ENCODE measurements at regions of chr6 and their contacts with region 1.

Region 1: DNA sequence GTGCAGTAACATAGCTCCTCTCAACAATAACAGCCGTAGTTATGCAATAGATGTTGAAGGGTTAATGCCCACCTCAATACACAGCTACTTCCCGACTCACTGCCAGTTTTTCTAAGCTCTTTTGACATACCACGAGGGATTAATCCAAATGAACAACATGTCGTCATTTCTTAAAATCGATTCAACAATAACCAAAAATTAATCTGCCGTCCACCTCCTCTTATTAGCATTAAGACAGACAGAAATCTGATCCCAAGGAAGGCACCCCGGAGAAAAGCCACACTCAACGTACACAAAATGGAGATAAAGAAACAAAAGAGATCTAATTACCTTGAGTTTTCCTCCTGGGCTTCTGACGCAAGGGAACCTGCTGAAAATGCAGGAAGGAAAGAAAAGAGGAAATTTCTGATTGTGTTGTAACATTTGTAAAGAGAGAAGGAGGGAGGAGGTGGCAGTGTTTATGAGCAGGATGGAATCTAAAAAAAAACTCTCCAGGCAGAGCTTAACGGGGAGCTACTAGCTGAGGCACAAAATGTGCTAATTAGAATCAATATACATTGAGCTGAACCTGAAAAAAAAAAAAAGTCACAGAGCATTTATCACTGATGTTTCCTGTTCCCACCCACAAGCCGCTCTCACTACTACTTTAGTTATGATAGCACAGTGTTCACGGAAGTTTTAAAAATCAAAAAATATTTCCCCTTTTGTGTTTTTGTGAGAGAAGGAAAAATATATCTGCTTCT is 109.3 kb downstream of the IPCEF1 start:
- DNase-seq: no peak
- H3K4me3 Mint-ChIP-seq: peak overlapping the region; percentile 84
- H3K27ac Mint-ChIP-seq: peak overlapping the region; percentile 52
- H3K4me1 Mint-ChIP-seq: peaks cover 79% of the 10 kb centered on the region
- H3K27me3 Mint-ChIP-seq: peaks cover 27% of the 10 kb centered on the region

Region 2: GRCh38 chr6:154229786-154230185 is 17.5 kb before region 1 on chr6:
- intact Hi-C with region 1: loop called (anchors 1 kb)
- DNase-seq: peak; percentile 45
- H3K4me3 Mint-ChIP-seq: peak overlapping the region; percentile 51
- H3K27ac Mint-ChIP-seq: peak overlapping the region; percentile 66
- H3K4me1 Mint-ChIP-seq: peaks cover 44% of the 10 kb centered on the region
- H3K27me3 Mint-ChIP-seq: no peaks in the 10 kb centered on the region

Region 3: DNA sequence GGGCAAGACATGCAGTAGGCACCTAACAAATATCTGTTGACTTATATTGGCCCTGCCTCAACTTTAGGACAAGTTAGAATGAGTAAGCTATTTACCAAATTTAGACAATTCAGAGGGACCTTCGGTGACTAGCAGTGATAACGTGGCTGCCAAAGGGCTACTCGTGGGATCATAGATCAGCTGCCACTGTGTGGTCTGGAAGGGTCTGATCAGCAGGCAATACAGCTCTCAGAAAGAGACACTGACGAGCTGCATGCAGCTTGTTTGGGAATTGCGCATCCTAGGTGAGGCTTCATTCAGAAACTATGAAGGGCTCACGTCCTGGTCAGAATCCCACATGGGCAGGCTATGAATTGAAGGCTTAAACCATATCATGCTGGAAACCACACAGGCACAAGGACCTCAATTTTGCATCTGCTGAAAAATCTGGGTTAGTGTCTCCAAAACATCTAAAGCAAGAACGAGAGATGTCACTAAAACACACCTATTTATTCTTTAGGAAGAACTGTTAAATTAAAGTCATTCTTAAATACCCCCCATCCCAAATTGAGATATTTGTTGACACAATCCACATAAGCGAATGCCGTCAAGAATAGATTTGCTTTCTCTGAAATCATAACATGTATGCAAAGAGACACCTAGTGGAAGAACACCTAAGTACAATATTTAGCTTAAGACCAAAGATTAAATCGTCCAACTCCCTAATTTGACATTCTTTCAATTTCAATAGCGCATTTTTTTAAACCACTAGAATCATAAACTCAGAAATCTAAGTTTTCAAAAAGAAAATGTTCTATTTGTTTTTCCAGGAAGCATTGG is 29.7 kb after region 1 on chr6:
- intact Hi-C with region 1: loop called (anchors 1 kb)
- DNase-seq: no peak
- H3K4me3 Mint-ChIP-seq: peak overlapping the region; percentile 6
- H3K27ac Mint-ChIP-seq: no peak overlapping the region
- H3K4me1 Mint-ChIP-seq: peaks cover 16% of the 10 kb centered on the region
- H3K27me3 Mint-ChIP-seq: peaks cover 13% of the 10 kb centered on the region

Region 4: DNA sequence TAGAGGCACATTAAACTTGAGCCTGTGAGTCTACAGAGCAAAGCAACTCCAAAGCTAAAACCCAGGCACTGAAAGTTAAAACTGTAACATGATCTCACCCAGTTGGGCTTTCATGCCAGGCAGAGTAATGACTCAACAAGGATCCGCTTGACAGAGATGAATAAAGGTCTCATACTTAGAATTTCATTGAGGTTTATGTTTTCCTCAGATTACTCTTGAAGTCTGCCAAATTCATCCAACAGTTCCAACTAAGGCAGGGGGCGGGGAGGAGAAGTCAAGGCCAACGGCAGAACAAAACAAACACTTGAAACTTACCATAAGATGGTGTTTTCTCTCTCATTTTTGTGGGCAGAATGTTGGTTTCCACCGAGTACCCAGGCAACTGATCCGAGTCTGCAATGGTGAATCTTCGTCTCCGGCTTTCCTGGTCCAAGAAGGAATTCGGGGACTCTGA is 163.4 kb after region 1 on chr6:
- intact Hi-C with region 1: loop called (anchors 5 kb)
- DNase-seq: no peak
- H3K4me3 Mint-ChIP-seq: no peak overlapping the region
- H3K27ac Mint-ChIP-seq: peak overlapping the region; percentile 70
- H3K4me1 Mint-ChIP-seq: peaks cover 18% of the 10 kb centered on the region
- H3K27me3 Mint-ChIP-seq: no peaks in the 10 kb centered on the region

Region 5: DNA sequence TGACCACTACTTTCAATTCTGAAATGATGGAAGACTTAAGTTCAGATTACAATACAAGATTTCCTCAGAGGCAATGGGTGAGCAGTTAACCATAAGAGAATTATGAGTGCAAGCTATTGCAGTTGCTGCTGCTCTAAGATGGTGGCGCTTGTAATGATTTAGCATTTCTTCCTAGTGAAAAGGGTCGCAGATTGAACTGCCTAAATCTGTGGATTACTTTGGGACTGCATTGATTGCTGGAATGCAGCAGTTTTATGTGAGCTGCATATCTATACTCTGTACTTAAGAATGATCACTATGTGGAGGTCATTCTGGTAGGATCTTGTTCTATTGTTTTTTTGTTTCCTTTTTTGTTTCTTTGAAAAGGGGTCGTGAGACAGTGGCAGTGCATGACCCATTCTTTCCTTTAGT is 491.3 kb after region 1 on chr6:
- intact Hi-C with region 1: loop called (anchors 5 kb)
- DNase-seq: no peak
- H3K4me3 Mint-ChIP-seq: no peak overlapping the region
- H3K27ac Mint-ChIP-seq: peak overlapping the region; percentile 36
- H3K4me1 Mint-ChIP-seq: peaks cover 35% of the 10 kb centered on the region
- H3K27me3 Mint-ChIP-seq: no peaks in the 10 kb centered on the region